ENCODE measurements at regions of chr14 and their contacts with region 1.

Region 1: DNA sequence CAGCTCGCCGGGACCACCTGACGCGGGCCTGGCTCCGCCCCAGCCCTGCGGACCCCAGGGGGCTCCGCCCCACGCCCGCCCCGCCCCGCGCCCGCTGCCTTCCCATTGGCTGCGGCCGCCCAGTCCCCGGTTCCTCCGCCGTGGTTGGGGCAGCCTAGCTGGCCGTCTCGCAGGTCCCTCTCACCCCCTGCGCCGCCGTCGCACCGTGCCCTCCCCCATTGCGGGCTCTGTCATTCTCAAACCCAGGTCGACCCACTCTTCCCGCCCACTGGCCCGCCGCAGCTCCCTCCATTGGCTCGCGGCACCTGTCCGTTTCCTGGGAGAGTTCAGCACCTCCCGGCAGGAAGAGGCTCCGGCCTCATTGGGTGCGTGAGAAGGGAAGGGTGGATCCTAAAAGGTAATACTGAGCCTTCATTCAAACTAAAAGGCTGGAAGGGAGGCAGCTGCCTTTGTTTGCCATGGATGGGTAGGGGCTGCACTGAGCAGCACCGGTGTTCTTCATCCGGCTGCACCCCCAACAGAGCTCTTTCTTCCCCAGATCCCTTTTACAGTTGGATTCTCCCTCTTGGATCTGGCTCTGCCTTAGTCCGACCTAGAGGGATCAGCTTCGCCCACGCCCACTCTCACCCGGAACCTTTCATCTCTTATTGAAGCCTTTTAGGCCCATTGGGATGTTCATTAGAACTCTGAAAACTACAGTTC is 381 bp upstream of the MAP3K9 start:
- DNase-seq: peak; percentile 84 to 85
- ATAC-seq: peak; percentile 92 to 98 (median 96)
- H3K4me3 ChIP-seq: peak overlapping the region; percentile 15 to 83 (median 74)
- H3K27ac ChIP-seq: peak overlapping the region in 5 of 10 donors; percentile 12 to 56 (median 23)
- H3K4me1 ChIP-seq: peaks cover 3 to 23% (median 12%) of the 10 kb centered on the region in 9 donors
- H3K27me3 ChIP-seq: peaks cover 0 to 76% (median 36%) of the 10 kb centered on the region in 7 donors
- CTCF ChIP-seq: no peak

Region 2: GRCh38 chr14:69818757-69819191 is 990.9 kb before region 1 on chr14:
- intact Hi-C with region 1: loop called in 1 of 10 experiments (anchors 10 kb)
- DNase-seq: peak in 1 of 2 donors; percentile 48
- ATAC-seq: peak in 7 of 8 donors; percentile 56 to 79 (median 62)
- H3K4me3 ChIP-seq: no peak overlapping the region
- H3K27ac ChIP-seq: no peak overlapping the region
- H3K4me1 ChIP-seq: peaks cover 0 to 4% (median 0%) of the 10 kb centered on the region in 9 donors
- H3K27me3 ChIP-seq: peaks cover 0 to 51% (median 38%) of the 10 kb centered on the region in 7 donors
- CTCF ChIP-seq: peak; percentile 74 to 87 (median 82)

Region 3: GRCh38 chr14:70622111-70622712 is 187.5 kb before region 1 on chr14:
- intact Hi-C with region 1: loop called in 2 of 10 experiments (anchors 10 kb)
- DNase-seq: peak in 1 of 2 donors; percentile 16
- ATAC-seq: peak in 4 of 8 donors; percentile 44 to 71 (median 62)
- H3K4me3 ChIP-seq: no peak overlapping the region
- H3K27ac ChIP-seq: no peak overlapping the region
- H3K4me1 ChIP-seq: peaks cover 0 to 9% (median 0%) of the 10 kb centered on the region in 9 donors
- H3K27me3 ChIP-seq: peaks cover 0 to 3% (median 0%) of the 10 kb centered on the region in 7 donors
- CTCF ChIP-seq: peak; percentile 23 to 73 (median 64)

Region 4: DNA sequence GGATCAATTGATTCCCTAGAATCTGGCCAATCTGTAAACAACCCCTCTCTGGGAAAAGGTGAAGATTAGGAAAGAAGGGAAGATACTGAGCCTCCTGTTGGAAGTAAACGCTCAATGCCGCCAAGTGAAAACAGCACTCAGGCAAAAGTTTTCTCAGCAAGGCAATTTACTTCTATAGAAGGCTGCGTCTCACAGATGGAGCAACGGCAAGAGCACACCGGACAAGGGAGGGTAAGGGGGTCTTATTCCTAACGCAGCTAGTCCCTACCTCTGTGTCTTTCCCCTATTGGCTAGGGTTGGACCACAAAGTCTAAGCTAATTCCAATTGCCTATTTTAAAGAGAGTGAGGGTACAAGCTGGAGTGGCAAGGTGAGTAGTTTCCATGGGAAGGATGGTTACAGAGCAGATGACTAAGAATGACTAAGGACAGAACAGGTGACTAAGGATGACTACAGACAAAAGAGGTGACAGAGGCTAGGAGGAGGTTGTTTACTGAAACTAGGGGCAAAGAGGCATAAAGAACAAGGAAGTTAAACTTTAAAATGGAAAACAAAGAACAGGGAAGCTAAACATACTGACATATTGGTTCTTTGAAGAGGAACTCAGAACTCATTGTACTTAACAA is 173.6 kb before region 1 on chr14:
- intact Hi-C with region 1: loop called in 1 of 10 experiments (anchors 10 kb)
- DNase-seq: no peak
- ATAC-seq: no peak
- H3K4me3 ChIP-seq: no peak overlapping the region
- H3K27ac ChIP-seq: no peak overlapping the region
- H3K4me1 ChIP-seq: peaks cover 0 to 7% (median 5%) of the 10 kb centered on the region in 9 donors
- H3K27me3 ChIP-seq: peaks cover 0 to 42% (median 34%) of the 10 kb centered on the region in 7 donors
- CTCF ChIP-seq: no peak

Region 5: GRCh38 chr14:70655110-70655826 is 154.4 kb before region 1 on chr14:
- intact Hi-C with region 1: no loop called
- DNase-seq: no peak
- ATAC-seq: peak in 2 of 8 donors; percentile 34 to 52
- H3K4me3 ChIP-seq: no peak overlapping the region
- H3K27ac ChIP-seq: peak overlapping the region in 1 of 10 donors; percentile 62
- H3K4me1 ChIP-seq: peaks cover 0 to 9% (median 0%) of the 10 kb centered on the region in 9 donors
- H3K27me3 ChIP-seq: peaks cover 0 to 4% (median 0%) of the 10 kb centered on the region in 7 donors
- CTCF ChIP-seq: no peak

Measured in heart right ventricle (tissue), 16 donors.